Aorta (tissue), 5 donors: ENCODE measurements at regions of chrX and their contacts with region 1.

Region 1: DNA sequence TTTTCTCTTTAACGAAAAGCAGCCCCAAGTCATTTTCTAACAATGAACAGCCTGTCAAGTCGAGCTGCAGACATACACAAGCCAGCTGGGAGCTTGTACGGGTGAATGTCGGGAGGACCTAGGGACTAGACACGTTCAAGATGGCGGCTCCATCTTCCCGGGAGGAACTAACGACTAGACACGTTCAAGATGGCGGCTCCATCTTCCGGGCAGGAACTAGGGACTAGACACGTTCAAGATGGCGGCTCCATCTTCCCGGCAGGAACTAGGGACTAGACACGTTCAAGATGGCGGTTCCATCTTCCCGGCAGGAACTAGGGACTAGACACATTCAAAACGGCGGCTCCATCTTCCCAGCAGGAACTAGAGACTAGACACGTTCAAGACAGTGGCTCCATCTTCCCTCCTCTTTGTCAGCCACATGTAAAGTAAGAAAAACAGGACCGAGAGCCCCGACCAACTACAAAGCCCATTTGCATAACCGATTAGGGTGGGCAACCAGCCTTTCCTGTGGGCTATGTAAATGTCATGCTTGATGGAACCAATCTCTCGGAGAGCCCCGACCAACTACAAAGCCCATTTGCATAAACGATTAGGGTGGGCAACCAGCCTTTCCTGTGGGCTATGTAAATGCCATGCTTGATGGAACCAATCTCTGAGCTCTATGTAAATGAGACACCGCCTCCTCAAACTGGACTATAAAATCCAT is 175.5 kb downstream of the DHRSX start:
- DNase-seq: peak; percentile 89
- ATAC-seq: peak; percentile 63
- H3K4me3 ChIP-seq: peak overlapping the region in 1 of 2 donors; percentile 40
- H3K27ac ChIP-seq: peak overlapping the region in 1 of 2 donors; percentile 20
- H3K4me1 ChIP-seq: no peaks in the 10 kb centered on the region
- H3K27me3 ChIP-seq: no peaks in the 10 kb centered on the region

Region 2: DNA sequence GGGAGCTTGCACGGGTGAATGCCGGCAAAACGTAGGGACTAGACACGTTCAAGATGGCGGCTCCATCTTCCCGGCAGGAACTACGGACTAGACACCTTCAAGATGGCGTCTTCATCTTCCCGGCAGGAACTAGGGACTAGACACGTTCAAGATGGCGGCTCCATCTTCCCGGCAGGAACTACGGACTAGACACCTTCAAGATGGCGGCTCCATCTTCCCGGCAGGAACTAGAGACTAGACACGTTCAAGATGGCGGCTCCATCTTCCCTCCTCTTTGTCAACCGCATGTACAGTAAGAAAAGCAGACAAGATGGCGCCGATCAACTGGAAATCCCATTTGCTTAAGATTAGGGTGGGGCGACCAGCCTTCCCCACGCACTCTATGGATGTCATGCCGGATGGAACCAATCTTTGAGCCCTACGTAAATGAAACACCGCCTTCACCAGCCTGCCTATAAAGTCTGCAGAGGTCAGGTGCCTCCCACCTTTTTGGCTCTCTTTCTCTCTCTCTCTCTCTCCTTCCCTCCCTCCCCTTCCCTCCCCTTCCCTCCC is 1335.2 kb before region 1 on chrX:
- intact Hi-C with region 1: loop called in 1 of 2 experiments (anchors 10 kb)
- DNase-seq: peak; percentile 86 to 92
- ATAC-seq: peak; percentile 94
- H3K4me3 ChIP-seq: no peak overlapping the region
- H3K27ac ChIP-seq: no peak overlapping the region
- H3K4me1 ChIP-seq: no peaks in the 10 kb centered on the region
- H3K27me3 ChIP-seq: no peaks in the 10 kb centered on the region

Region 3: GRCh38 chrX:2500267-2501075 is 175.2 kb after region 1 on chrX and contains the starts of genes DHRSX and ZBED1:
- intact Hi-C with region 1: loop called in 1 of 2 experiments (anchors 5 kb)
- DNase-seq: peak; percentile 65 to 85
- ATAC-seq: peak; percentile 40
- H3K4me3 ChIP-seq: peak within 1 kb of the TSS; percentile 91 to 99
- H3K27ac ChIP-seq: peak within 1 kb of the TSS in 1 of 2 donors; percentile 42
- H3K4me1 ChIP-seq: no peaks in the 10 kb centered on the region
- H3K27me3 ChIP-seq: no peaks in the 10 kb centered on the region
- total RNA-seq, gene DHRSX: 15.7 to 21.8 TPM
- total RNA-seq, gene ZBED1: 31.3 to 33.5 TPM